Naive thymus-derived CD4-positive, alpha-beta T cell (primary cell): ENCODE measurements at regions of chr4 and their contacts with region 1.

Region 1: GRCh38 chr4:145732895-145733880 is 53.2 kb downstream of the C4orf51 start:
- DNase-seq: peak; percentile 56 to 87 (median 68)
- ATAC-seq: peak; percentile 97
- H3K4me3 ChIP-seq: peak overlapping the region; percentile 59
- H3K4me3 Mint-ChIP-seq: peak overlapping the region; percentile 72 to 86 (median 82)
- H3K27ac ChIP-seq: peak overlapping the region; percentile 63
- H3K27ac Mint-ChIP-seq: peak overlapping the region in 5 of 9 donors; percentile 50 to 77 (median 62)
- H3K4me1 ChIP-seq: peaks cover 0 to 4% of the 10 kb centered on the region in 2 donors
- H3K4me1 Mint-ChIP-seq: peaks cover 0 to 13% (median 9%) of the 10 kb centered on the region in 7 donors
- H3K27me3 ChIP-seq: no peaks in the 10 kb centered on the region
- H3K27me3 Mint-ChIP-seq: peaks cover 0 to 11% (median 3%) of the 10 kb centered on the region in 5 donors

Region 2: GRCh38 chr4:145097821-145098674 is 635.1 kb before region 1 on chr4 and contains the starts of genes ABCE1 and ANAPC10:
- CTCF ChIA-PET with region 1: no interaction called
- POLR2A ChIA-PET with region 1: interaction called, 4 read pairs
- intact Hi-C with region 1: loop called in 1 of 2 experiments (anchors 1 kb)
- DNase-seq: peak; percentile 88 to 98 (median 94)
- ATAC-seq: peak; percentile 96
- H3K4me3 ChIP-seq: peak within 1 kb of the TSS; percentile 94
- H3K4me3 Mint-ChIP-seq: peak within 1 kb of the TSS in 9 of 10 donors; percentile 93 to 98 (median 96)
- H3K27ac ChIP-seq: peak within 1 kb of the TSS; percentile 80
- H3K27ac Mint-ChIP-seq: peak within 1 kb of the TSS; percentile 95 to 99 (median 98)
- H3K4me1 ChIP-seq: peaks cover 22 to 23% of the 10 kb centered on the region in 2 donors
- H3K4me1 Mint-ChIP-seq: peaks cover 28 to 52% (median 33%) of the 10 kb centered on the region in 7 donors
- H3K27me3 ChIP-seq: no peaks in the 10 kb centered on the region
- H3K27me3 Mint-ChIP-seq: no peaks in the 10 kb centered on the region
- total RNA-seq, gene ABCE1: 43.4 to 81.3 (median 62.2) TPM
- total RNA-seq, gene ANAPC10: 13.2 to 28.0 (median 19.6) TPM

Region 3: GRCh38 chr4:145808021-145808650 is 74.9 kb after region 1 on chr4:
- CTCF ChIA-PET with region 1: no interaction called
- POLR2A ChIA-PET with region 1: no interaction called
- intact Hi-C with region 1: loop called in 1 of 2 experiments (anchors 2 kb)
- DNase-seq: peak in 1 of 9 donors; percentile 43
- ATAC-seq: peak; percentile 61
- H3K4me3 ChIP-seq: no peak overlapping the region
- H3K4me3 Mint-ChIP-seq: peak overlapping the region in 2 of 10 donors; percentile 13 to 81
- H3K27ac ChIP-seq: no peak overlapping the region
- H3K27ac Mint-ChIP-seq: peak overlapping the region in 2 of 9 donors; percentile 25 to 98
- H3K4me1 ChIP-seq: no peaks in the 10 kb centered on the region
- H3K4me1 Mint-ChIP-seq: peaks cover 0 to 38% (median 0%) of the 10 kb centered on the region in 7 donors
- H3K27me3 ChIP-seq: no peaks in the 10 kb centered on the region
- H3K27me3 Mint-ChIP-seq: no peaks in the 10 kb centered on the region

Region 4: GRCh38 chr4:146175541-146176453 is 442.6 kb after region 1 on chr4 and contains the start of gene LSM6:
- CTCF ChIA-PET with region 1: no interaction called
- POLR2A ChIA-PET with region 1: no interaction called
- intact Hi-C with region 1: loop called (anchors 1 to 5 kb)
- DNase-seq: peak; percentile 63 to 86 (median 84)
- ATAC-seq: peak; percentile 94
- H3K4me3 ChIP-seq: peak within 1 kb of the TSS; percentile 87
- H3K4me3 Mint-ChIP-seq: peak within 1 kb of the TSS; percentile 88 to 95 (median 92)
- H3K27ac ChIP-seq: peak within 1 kb of the TSS; percentile 94
- H3K27ac Mint-ChIP-seq: peak within 1 kb of the TSS; percentile 82 to 99 (median 97)
- H3K4me1 ChIP-seq: peaks cover 25 to 31% of the 10 kb centered on the region in 2 donors
- H3K4me1 Mint-ChIP-seq: peaks cover 29 to 66% (median 57%) of the 10 kb centered on the region in 7 donors
- H3K27me3 ChIP-seq: no peaks in the 10 kb centered on the region
- H3K27me3 Mint-ChIP-seq: no peaks in the 10 kb centered on the region
- total RNA-seq, gene LSM6: 24.7 to 49.7 (median 46.2) TPM

Region 5: DNA sequence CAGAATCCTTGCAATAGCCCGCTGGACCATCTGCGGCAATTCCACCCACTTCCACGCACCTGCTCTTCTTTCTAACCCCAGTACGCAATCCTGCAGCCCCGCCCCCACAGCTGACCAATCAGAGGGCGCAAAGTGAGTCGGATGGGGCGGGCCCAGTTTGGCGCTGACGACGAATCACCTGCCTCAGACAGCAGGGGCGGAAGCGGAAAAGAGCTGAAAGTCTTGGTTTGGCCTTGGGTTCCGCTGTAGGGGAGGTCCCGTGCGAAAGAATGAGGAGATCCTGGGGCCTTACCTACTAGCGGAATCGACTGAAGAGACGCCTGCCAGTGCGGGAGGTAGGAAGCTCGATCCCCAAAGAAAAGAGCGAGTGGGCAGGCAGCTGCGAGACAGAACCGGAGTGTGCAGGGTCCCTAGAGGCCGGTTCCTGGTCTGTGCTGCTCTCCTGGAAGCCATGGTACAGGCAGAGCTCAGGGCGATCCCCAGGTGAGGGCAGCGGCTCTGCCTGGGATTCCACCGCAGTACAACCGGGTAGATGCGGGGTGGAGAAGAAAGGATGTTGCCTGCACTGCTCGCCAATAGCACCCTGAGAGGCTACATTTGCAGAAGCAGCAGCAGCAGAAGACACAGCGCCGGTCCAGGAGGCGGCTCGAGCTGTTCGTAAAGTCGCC is 1884.1 kb after region 1 on chr4 and contains the start of gene TMEM184C:
- CTCF ChIA-PET with region 1: no interaction called
- POLR2A ChIA-PET with region 1: no interaction called
- intact Hi-C with region 1: loop called (anchors 2 to 10 kb)
- DNase-seq: peak; percentile 97 to 99 (median 98)
- ATAC-seq: peak; percentile 97
- H3K4me3 ChIP-seq: peak within 1 kb of the TSS; percentile 89
- H3K4me3 Mint-ChIP-seq: peak within 1 kb of the TSS; percentile 86 to 98 (median 94)
- H3K27ac ChIP-seq: peak within 1 kb of the TSS; percentile 87
- H3K27ac Mint-ChIP-seq: peak within 1 kb of the TSS; percentile 92 to 99 (median 95)
- H3K4me1 ChIP-seq: peaks cover 21 to 30% of the 10 kb centered on the region in 2 donors
- H3K4me1 Mint-ChIP-seq: peaks cover 21 to 48% (median 33%) of the 10 kb centered on the region in 7 donors
- H3K27me3 ChIP-seq: no peaks in the 10 kb centered on the region
- H3K27me3 Mint-ChIP-seq: peaks cover 0 to 22% (median 4%) of the 10 kb centered on the region in 5 donors
- total RNA-seq, gene TMEM184C: 13.7 to 27.4 (median 19.0) TPM